ENCODE measurements at regions of chr4 and their contacts with region 1.

Region 1: GRCh38 chr4:112636688-112637551 is at the starts of genes LARP7 and ZGRF1:
- DNase-seq: peak; percentile 91
- ATAC-seq: peak; percentile 89
- H3K4me3 Mint-ChIP-seq: no peak within 1 kb of the TSS
- H3K27ac Mint-ChIP-seq: no peak within 1 kb of the TSS
- H3K4me1 Mint-ChIP-seq: peaks cover 22% of the 10 kb centered on the region
- H3K27me3 Mint-ChIP-seq: no peaks in the 10 kb centered on the region
- CTCF ChIP-seq: peak; percentile 67
- total RNA-seq, gene LARP7: 56.9 and 57.8 TPM in 2 replicates
- total RNA-seq, gene ZGRF1: 12.3 and 13.7 TPM in 2 replicates

Region 2: GRCh38 chr4:112284662-112285411 is 352.1 kb before region 1 on chr4:
- CTCF ChIA-PET with region 1: no interaction called
- POLR2A ChIA-PET with region 1: no interaction called
- intact Hi-C with region 1: loop called (anchors 1 kb)
- DNase-seq: no peak
- ATAC-seq: peak; percentile 13
- H3K4me3 Mint-ChIP-seq: peak overlapping the region; percentile 98
- H3K27ac Mint-ChIP-seq: peak overlapping the region; percentile 98
- H3K4me1 Mint-ChIP-seq: peaks cover 88% of the 10 kb centered on the region
- H3K27me3 Mint-ChIP-seq: no peaks in the 10 kb centered on the region
- CTCF ChIP-seq: no peak

Region 3: DNA sequence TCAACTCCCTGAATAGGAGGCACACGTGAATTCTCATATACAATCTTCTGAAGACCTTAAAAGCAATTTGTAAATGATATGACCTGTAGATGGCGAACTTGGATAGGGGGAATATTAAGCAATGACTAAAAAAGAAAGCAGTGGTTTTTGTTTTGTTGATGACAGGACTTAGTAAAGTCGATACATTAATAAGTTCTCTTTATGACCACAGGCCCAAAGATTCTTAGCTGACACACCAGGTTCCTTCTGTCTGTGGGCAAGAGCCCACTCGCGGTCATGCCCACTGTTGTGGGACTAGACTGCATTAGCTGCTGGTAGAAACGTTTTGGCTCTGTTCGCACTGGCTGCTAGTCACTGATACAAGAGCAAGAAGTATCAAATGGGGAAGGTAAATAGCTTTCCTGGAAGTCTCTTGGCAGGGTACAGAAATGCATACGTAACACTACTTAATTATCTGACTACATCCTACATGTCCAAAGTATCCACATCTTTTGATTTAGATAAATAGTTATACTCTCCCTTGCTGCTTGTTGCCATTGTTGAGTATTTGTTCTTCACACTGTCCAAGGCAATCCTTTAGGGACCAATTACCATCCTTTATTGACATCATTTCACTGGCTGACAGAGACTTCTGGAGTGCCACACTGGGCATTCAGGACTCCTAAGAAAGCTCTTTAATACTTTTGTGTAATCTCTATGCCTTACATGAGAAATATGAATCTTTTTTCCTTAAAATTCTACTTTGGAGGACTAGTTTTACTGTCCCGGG is 308.8 kb before region 1 on chr4:
- CTCF ChIA-PET with region 1: interaction called, 3 read pairs
- POLR2A ChIA-PET with region 1: no interaction called
- intact Hi-C with region 1: loop called (anchors 1 kb)
- DNase-seq: no peak
- ATAC-seq: peak; percentile 47
- H3K4me3 Mint-ChIP-seq: peak overlapping the region; percentile 9
- H3K27ac Mint-ChIP-seq: peak overlapping the region; percentile 8
- H3K4me1 Mint-ChIP-seq: no peaks in the 10 kb centered on the region
- H3K27me3 Mint-ChIP-seq: no peaks in the 10 kb centered on the region
- CTCF ChIP-seq: peak; percentile 19

Region 4: GRCh38 chr4:112765317-112765975 is 128.5 kb after region 1 on chr4:
- CTCF ChIA-PET with region 1: interaction called, 7 read pairs
- POLR2A ChIA-PET with region 1: no interaction called
- intact Hi-C with region 1: loop called (anchors 1 kb)
- DNase-seq: no peak
- ATAC-seq: peak; percentile 54
- H3K4me3 Mint-ChIP-seq: no peak overlapping the region
- H3K27ac Mint-ChIP-seq: no peak overlapping the region
- H3K4me1 Mint-ChIP-seq: peaks cover 3% of the 10 kb centered on the region
- H3K27me3 Mint-ChIP-seq: peaks cover 4% of the 10 kb centered on the region
- CTCF ChIP-seq: no peak

Region 5: GRCh38 chr4:112938461-112939058 is 301.6 kb after region 1 on chr4:
- CTCF ChIA-PET with region 1: interaction called, 5 read pairs
- POLR2A ChIA-PET with region 1: no interaction called
- intact Hi-C with region 1: loop called (anchors 1 kb)
- DNase-seq: no peak
- ATAC-seq: no peak
- H3K4me3 Mint-ChIP-seq: no peak overlapping the region
- H3K27ac Mint-ChIP-seq: no peak overlapping the region
- H3K4me1 Mint-ChIP-seq: no peaks in the 10 kb centered on the region
- H3K27me3 Mint-ChIP-seq: peaks cover 4% of the 10 kb centered on the region
- CTCF ChIP-seq: no peak

Region 6: DNA sequence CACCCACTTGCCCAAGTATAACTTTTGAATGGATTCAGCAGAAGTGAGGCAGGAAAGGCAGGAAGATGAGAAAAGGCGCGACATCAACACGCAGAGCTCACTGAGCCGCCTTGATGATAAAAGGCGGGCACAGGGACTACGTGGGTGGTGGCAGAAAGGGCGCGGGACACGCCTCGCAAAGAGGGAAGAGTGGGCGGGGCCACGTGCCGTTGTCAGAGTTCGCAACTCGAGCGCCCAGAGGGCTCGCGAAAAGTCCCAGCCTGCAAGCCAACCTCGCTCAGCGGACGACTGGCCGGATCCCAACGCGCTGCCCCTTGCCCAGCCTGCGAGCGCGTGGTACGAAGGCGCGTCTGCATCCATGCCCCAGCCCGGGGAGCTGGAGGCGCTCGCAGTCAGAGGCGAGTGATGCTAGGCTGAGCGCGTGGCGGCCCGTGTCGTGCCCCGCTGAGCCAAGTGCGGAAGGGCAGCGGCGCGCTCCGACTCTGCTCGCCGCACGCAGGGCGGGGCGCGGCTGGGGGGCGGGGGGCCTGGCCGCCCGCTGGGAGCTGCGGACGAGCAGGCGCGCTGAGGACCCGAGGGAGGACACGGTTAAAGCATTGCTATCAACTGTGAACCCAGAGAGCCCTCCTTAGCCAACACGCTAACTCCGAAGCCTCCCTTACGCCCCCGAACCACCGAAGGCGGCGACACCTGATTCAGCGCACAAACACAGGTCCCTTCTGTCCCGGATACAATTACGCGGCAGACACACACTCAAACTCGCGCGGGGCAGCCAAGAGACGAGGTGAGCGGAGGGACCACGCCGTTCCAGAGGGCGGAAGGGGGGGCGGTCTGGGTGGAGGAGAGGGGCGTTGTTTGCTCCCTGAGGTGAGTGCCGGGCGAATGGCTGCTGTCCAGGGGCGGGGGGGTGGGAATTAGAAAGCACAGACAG is 1961.5 kb after region 1 on chr4 and contains the start of gene UGT8:
- CTCF ChIA-PET with region 1: no interaction called
- POLR2A ChIA-PET with region 1: no interaction called
- intact Hi-C with region 1: loop called (anchors 1 kb)
- DNase-seq: peak; percentile 83
- ATAC-seq: peak; percentile 75
- H3K4me3 Mint-ChIP-seq: peak within 1 kb of the TSS; percentile 97
- H3K27ac Mint-ChIP-seq: peak within 1 kb of the TSS; percentile 90
- H3K4me1 Mint-ChIP-seq: peaks cover 22% of the 10 kb centered on the region
- H3K27me3 Mint-ChIP-seq: no peaks in the 10 kb centered on the region
- CTCF ChIP-seq: no peak
- total RNA-seq, gene UGT8: 12.9 and 20.0 TPM in 2 replicates

Measured in activated B cell treated with CpG ODN at 0.5 μM for 24 hours (primary cell).